ENCODE measurements at regions of chr7 and their contacts with region 1.

Region 1: DNA sequence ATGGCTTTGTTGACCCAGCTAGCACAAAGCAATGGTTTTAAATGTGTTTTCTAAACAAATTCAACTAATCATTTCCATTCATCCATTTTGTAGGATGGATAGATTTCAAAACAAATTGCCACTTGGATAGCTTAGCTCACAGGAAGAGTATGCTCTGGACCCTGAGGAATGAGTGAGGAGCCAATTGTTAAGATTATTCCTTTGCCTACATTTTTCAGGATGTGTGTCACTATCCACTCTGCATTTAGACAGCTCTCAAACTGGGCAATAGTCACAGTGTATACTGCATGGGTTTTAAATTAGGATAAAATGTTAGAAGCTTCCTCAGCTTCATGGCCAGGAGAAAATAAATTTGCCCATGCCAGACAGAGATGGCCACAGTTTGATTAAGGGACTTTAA is 605.6 kb upstream of the TEX47 start:
- DNase-seq: no peak
- CTCF ChIP-seq: no peak

Region 2: DNA sequence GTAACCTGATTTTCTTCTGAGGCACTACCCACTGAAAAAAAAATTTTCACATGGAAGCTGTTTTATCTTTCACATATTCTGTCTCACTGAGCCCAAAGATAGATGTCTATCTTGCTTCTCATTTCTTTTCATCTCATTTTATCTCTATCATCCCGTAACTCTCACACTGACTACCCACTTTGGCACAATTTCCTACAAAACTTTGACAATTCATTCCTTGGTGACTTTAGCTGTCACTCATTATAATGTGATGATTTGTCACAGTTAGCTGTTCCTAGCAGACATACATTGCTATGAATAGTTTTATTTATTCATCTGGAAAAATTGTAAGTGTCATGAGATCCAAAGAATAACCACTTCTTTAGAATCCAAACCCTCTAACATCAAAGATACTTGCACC is 15.7 kb before region 1 on chr7:
- CTCF ChIA-PET with region 1: interaction called, 11 read pairs
- POLR2A ChIA-PET with region 1: no interaction called
- DNase-seq: no peak
- CTCF ChIP-seq: no peak

Measured in GM10248 (cell line).